ENCODE measurements at regions of chrX and their contacts with region 1.

Region 1: GRCh38 chrX:43939187-43939926 is 33.8 kb downstream of the NDP start:
- DNase-seq: no peak
- ATAC-seq: peak in 2 of 4 donors; percentile 53 to 74
- H3K4me3 ChIP-seq: no peak overlapping the region
- H3K27ac ChIP-seq: no peak overlapping the region
- H3K4me1 ChIP-seq: no peaks in the 10 kb centered on the region
- H3K27me3 ChIP-seq: peaks cover 0 to 13% (median 0%) of the 10 kb centered on the region in 3 donors
- CTCF ChIP-seq: peak; percentile 33

Region 2: DNA sequence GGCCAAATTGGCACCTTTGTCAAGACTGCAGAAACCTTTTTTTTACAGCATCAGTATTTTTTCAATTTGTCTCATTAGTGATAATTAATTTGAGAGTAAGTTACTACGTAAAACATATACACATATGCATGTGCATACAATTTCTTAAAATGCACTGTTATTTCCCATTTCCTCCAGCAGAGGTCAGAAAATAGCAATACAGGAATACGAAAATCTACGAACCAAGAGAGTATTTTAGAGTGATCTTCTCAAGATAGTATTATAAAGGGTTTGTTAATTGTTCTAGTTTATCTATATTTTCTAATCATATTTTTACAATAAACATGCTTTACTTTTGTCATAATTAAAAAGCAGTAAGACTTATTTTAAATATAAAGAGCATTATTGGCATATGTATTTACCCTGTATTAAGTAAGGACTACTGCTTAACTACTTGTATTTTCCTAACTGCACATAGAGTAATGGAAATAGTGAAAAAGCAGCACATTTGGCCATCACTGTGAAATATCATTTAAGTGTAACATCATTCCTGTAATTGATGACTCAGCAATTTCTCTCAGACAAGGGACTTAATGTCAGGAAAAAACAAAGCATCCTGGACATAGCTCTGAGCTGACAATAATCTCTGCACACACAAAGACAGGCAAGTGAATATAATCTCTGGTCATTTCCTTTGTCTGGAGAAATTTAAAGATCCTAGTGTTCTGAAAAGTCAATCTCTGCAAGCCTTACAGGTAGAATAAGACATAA is 102.7 kb before region 1 on chrX:
- intact Hi-C with region 1: loop called (anchors 2 to 5 kb)
- DNase-seq: no peak
- ATAC-seq: peak in 2 of 4 donors; percentile 59 to 74
- H3K4me3 ChIP-seq: no peak overlapping the region
- H3K27ac ChIP-seq: no peak overlapping the region
- H3K4me1 ChIP-seq: no peaks in the 10 kb centered on the region
- H3K27me3 ChIP-seq: peaks cover 0 to 12% (median 0%) of the 10 kb centered on the region in 3 donors
- CTCF ChIP-seq: peak; percentile 69

Region 3: DNA sequence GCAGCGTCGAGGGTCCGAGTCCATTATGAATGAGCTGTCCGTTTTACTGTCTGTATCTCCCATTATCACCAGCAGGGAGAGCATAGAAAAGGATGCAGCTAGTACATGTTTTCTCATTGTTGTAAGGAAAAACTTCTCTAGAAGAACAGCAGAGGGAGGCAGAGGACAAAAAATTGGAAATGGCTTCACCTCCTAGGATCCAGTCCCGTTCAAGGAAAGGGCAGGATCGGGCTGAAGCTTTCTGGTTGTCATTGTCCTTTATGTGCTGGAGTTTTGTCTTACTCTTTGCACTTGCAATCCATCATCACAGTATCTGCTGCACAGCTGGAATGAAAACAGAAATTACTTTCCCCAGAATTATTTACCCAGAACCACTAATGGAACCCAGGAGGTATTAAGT is 19.2 kb after region 1 on chrX:
- intact Hi-C with region 1: no loop called
- DNase-seq: no peak
- ATAC-seq: peak; percentile 62 to 83 (median 66)
- H3K4me3 ChIP-seq: no peak overlapping the region
- H3K27ac ChIP-seq: no peak overlapping the region
- H3K4me1 ChIP-seq: no peaks in the 10 kb centered on the region
- H3K27me3 ChIP-seq: peaks cover 0 to 11% (median 0%) of the 10 kb centered on the region in 3 donors
- CTCF ChIP-seq: peak; percentile 72

Region 4: DNA sequence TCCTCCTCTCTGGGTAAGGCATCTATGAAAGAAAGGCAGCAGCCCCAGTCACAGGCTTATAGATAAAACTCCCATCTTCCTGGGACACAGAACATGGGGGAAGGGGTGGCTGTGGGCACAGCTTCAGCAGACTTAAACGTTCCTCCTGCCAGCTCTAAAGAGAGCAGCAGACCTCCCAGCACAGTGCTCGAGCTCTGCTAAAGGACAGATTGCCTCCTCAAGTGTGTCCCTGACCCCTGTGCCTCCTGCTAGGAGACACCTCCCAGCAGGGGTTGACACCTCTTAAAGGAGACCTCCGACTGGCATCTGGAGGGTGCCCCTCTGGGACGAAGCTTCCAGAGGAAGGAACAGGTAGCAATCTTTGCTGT is 314.2 kb after region 1 on chrX:
- intact Hi-C with region 1: no loop called
- DNase-seq: no peak
- ATAC-seq: no peak
- H3K4me3 ChIP-seq: no peak overlapping the region
- H3K27ac ChIP-seq: no peak overlapping the region
- H3K4me1 ChIP-seq: no peaks in the 10 kb centered on the region
- H3K27me3 ChIP-seq: peaks cover 0 to 10% (median 0%) of the 10 kb centered on the region in 3 donors
- CTCF ChIP-seq: no peak

Region 5: GRCh38 chrX:44317196-44317595 is 377.8 kb after region 1 on chrX:
- intact Hi-C with region 1: no loop called
- DNase-seq: no peak
- ATAC-seq: no peak
- H3K4me3 ChIP-seq: no peak overlapping the region
- H3K27ac ChIP-seq: no peak overlapping the region
- H3K4me1 ChIP-seq: no peaks in the 10 kb centered on the region
- H3K27me3 ChIP-seq: peaks cover 0 to 4% (median 0%) of the 10 kb centered on the region in 3 donors
- CTCF ChIP-seq: no peak

Region 6: DNA sequence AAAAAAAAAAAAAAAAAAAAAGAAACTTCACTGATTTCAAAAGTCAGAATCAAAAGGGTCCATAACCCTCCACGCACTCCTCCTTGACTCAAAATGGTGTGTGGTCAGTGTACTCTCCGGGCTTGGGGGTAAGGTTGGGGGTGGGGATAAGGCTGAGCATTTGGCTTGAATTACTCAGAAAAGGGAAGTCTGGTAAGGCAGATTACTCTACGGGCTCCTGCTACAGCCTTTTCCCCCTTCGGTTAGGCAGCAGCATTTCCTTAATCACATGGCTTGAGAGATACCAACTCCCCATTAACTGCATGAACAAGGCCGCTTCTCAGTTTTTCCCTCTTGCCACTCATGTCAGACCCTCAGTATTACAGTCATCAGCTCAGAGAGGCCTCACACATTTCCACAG is 769.1 kb after region 1 on chrX:
- intact Hi-C with region 1: no loop called
- DNase-seq: no peak
- ATAC-seq: no peak
- H3K4me3 ChIP-seq: no peak overlapping the region
- H3K27ac ChIP-seq: no peak overlapping the region
- H3K4me1 ChIP-seq: no peaks in the 10 kb centered on the region
- H3K27me3 ChIP-seq: peaks cover 0 to 2% (median 0%) of the 10 kb centered on the region in 3 donors
- CTCF ChIP-seq: no peak

Measured in psoas muscle (tissue), 8 donors.